Naive thymus-derived CD4-positive, alpha-beta T cell (primary cell): ENCODE measurements at regions of chr5 and their contacts with region 1.

Region 1: GRCh38 chr5:126449751-126450271 is 26.6 kb downstream of the GRAMD2B start:
- DNase-seq: peak in 8 of 9 donors; percentile 48 to 75 (median 64)
- ATAC-seq: peak; percentile 87
- H3K4me3 ChIP-seq: peak overlapping the region; percentile 47
- H3K4me3 Mint-ChIP-seq: peak overlapping the region; percentile 75 to 94 (median 88)
- H3K27ac ChIP-seq: peak overlapping the region; percentile 77
- H3K27ac Mint-ChIP-seq: peak overlapping the region; percentile 96 to 100 (median 99)
- H3K4me1 ChIP-seq: peaks cover 11 to 57% of the 10 kb centered on the region in 2 donors
- H3K4me1 Mint-ChIP-seq: peaks cover 32 to 90% (median 75%) of the 10 kb centered on the region in 7 donors
- H3K27me3 ChIP-seq: no peaks in the 10 kb centered on the region
- H3K27me3 Mint-ChIP-seq: no peaks in the 10 kb centered on the region

Region 2: GRCh38 chr5:126311766-126312165 is 138.0 kb before region 1 on chr5:
- CTCF ChIA-PET with region 1: no interaction called
- POLR2A ChIA-PET with region 1: no interaction called
- intact Hi-C with region 1: no loop called
- DNase-seq: no peak
- ATAC-seq: no peak
- H3K4me3 ChIP-seq: no peak overlapping the region
- H3K4me3 Mint-ChIP-seq: no peak overlapping the region
- H3K27ac ChIP-seq: no peak overlapping the region
- H3K27ac Mint-ChIP-seq: no peak overlapping the region
- H3K4me1 ChIP-seq: no peaks in the 10 kb centered on the region
- H3K4me1 Mint-ChIP-seq: no peaks in the 10 kb centered on the region
- H3K27me3 ChIP-seq: no peaks in the 10 kb centered on the region
- H3K27me3 Mint-ChIP-seq: peaks cover 4 to 27% (median 15%) of the 10 kb centered on the region in 5 donors

Region 3: DNA sequence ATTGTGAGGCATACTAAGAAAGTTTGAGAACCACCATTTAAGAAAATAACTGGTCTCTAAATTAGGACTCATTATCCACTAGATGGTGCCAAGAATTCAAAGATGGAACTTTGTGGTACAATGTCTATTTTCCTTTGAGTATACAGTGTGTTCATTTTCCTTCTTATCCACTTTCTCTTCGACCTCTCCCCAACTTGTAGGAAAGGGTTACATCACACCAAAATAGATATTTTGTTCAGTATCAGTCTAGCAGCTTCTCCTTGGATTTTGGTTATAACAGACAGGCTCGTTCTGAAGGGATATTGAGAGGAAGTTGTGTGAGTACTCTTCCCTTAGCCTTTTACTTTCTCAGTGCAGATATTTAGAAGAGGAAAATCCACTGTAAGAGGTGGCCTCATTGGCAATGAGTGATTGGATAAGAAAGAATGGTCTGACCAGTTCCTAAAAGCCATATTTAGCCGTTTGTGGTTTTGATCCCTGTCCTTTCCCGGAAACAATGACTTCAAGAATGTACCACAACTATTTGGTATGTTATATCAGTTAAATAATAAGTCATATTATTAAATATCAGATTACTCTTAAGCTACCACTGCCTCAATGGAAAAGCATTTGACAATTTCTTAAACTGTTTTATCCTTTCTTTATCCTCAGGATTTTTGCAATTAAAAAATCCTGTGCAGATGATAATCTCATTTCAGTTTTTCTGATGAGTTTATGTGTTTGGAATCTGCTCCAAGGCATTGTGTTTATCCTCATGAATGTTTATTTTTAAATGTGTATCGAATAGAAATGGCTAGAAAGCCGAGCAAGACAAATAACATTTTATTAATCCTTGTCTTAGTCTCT is 95.6 kb before region 1 on chr5:
- CTCF ChIA-PET with region 1: interaction called, 3 read pairs
- POLR2A ChIA-PET with region 1: interaction called, 3 read pairs
- intact Hi-C with region 1: loop called in 1 of 2 experiments (anchors 1 kb)
- DNase-seq: peak in 7 of 9 donors; percentile 26 to 66 (median 53)
- ATAC-seq: peak; percentile 78
- H3K4me3 ChIP-seq: no peak overlapping the region
- H3K4me3 Mint-ChIP-seq: peak overlapping the region; percentile 12 to 80 (median 72)
- H3K27ac ChIP-seq: no peak overlapping the region
- H3K27ac Mint-ChIP-seq: peak overlapping the region in 7 of 9 donors; percentile 19 to 65 (median 36)
- H3K4me1 ChIP-seq: peaks cover 0 to 12% of the 10 kb centered on the region in 2 donors
- H3K4me1 Mint-ChIP-seq: peaks cover 3 to 21% (median 15%) of the 10 kb centered on the region in 7 donors
- H3K27me3 ChIP-seq: no peaks in the 10 kb centered on the region
- H3K27me3 Mint-ChIP-seq: peaks cover 0 to 16% (median 0%) of the 10 kb centered on the region in 5 donors

Region 4: GRCh38 chr5:126490167-126490940 is 40.5 kb after region 1 on chr5:
- CTCF ChIA-PET with region 1: interaction called, 7 read pairs
- POLR2A ChIA-PET with region 1: no interaction called
- intact Hi-C with region 1: loop called in 1 of 2 experiments (anchors 5 kb)
- DNase-seq: no peak
- ATAC-seq: no peak
- H3K4me3 ChIP-seq: no peak overlapping the region
- H3K4me3 Mint-ChIP-seq: no peak overlapping the region
- H3K27ac ChIP-seq: no peak overlapping the region
- H3K27ac Mint-ChIP-seq: peak overlapping the region in 7 of 9 donors; percentile 2 to 91 (median 38)
- H3K4me1 ChIP-seq: no peaks in the 10 kb centered on the region
- H3K4me1 Mint-ChIP-seq: peaks cover 0 to 10% (median 0%) of the 10 kb centered on the region in 7 donors
- H3K27me3 ChIP-seq: no peaks in the 10 kb centered on the region
- H3K27me3 Mint-ChIP-seq: no peaks in the 10 kb centered on the region

Region 5: DNA sequence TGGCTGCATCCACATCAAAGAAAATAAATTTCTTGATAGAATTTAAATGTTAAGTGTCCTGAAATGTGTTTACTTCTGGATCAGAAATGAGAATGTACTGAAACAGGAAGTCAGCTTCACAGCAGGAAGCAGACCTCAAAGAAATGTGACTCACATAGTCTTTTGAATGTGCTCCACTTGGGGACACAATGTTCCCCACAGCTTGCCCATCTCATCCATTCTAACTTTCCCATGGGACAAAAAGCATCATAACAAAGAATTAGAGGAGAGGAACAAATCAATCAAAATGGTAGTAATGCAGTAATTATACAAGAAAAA is 59.1 kb after region 1 on chr5:
- CTCF ChIA-PET with region 1: interaction called, 3 read pairs
- POLR2A ChIA-PET with region 1: interaction called, 7 read pairs
- intact Hi-C with region 1: loop called in 1 of 2 experiments (anchors 2 kb)
- DNase-seq: peak in 6 of 9 donors; percentile 17 to 68 (median 49)
- ATAC-seq: peak; percentile 81
- H3K4me3 ChIP-seq: peak overlapping the region; percentile 11
- H3K4me3 Mint-ChIP-seq: peak overlapping the region; percentile 36 to 91 (median 83)
- H3K27ac ChIP-seq: peak overlapping the region; percentile 64
- H3K27ac Mint-ChIP-seq: peak overlapping the region; percentile 77 to 97 (median 93)
- H3K4me1 ChIP-seq: peaks cover 5 to 39% of the 10 kb centered on the region in 2 donors
- H3K4me1 Mint-ChIP-seq: peaks cover 11 to 75% (median 65%) of the 10 kb centered on the region in 7 donors
- H3K27me3 ChIP-seq: no peaks in the 10 kb centered on the region
- H3K27me3 Mint-ChIP-seq: no peaks in the 10 kb centered on the region

Region 6: GRCh38 chr5:127517480-127518318 is 1067.9 kb after region 1 on chr5 and contains the start of gene PRRC1:
- CTCF ChIA-PET with region 1: no interaction called
- POLR2A ChIA-PET with region 1: no interaction called
- intact Hi-C with region 1: loop called in 1 of 2 experiments (anchors 10 kb)
- DNase-seq: peak; percentile 63 to 80 (median 74)
- ATAC-seq: peak; percentile 99
- H3K4me3 ChIP-seq: peak within 1 kb of the TSS; percentile 94
- H3K4me3 Mint-ChIP-seq: peak within 1 kb of the TSS; percentile 87 to 92 (median 89)
- H3K27ac ChIP-seq: peak within 1 kb of the TSS; percentile 89
- H3K27ac Mint-ChIP-seq: peak within 1 kb of the TSS; percentile 48 to 91 (median 82)
- H3K4me1 ChIP-seq: peaks cover 0 to 18% of the 10 kb centered on the region in 2 donors
- H3K4me1 Mint-ChIP-seq: peaks cover 25 to 48% (median 38%) of the 10 kb centered on the region in 7 donors
- H3K27me3 ChIP-seq: no peaks in the 10 kb centered on the region
- H3K27me3 Mint-ChIP-seq: peaks cover under 1 to 7% (median 6%) of the 10 kb centered on the region in 5 donors
- total RNA-seq, gene PRRC1: 34.6 to 56.6 (median 49.4) TPM